Mammary epithelial cell (primary cell): ENCODE measurements at regions of chr11 and their contacts with region 1.

Region 1: DNA sequence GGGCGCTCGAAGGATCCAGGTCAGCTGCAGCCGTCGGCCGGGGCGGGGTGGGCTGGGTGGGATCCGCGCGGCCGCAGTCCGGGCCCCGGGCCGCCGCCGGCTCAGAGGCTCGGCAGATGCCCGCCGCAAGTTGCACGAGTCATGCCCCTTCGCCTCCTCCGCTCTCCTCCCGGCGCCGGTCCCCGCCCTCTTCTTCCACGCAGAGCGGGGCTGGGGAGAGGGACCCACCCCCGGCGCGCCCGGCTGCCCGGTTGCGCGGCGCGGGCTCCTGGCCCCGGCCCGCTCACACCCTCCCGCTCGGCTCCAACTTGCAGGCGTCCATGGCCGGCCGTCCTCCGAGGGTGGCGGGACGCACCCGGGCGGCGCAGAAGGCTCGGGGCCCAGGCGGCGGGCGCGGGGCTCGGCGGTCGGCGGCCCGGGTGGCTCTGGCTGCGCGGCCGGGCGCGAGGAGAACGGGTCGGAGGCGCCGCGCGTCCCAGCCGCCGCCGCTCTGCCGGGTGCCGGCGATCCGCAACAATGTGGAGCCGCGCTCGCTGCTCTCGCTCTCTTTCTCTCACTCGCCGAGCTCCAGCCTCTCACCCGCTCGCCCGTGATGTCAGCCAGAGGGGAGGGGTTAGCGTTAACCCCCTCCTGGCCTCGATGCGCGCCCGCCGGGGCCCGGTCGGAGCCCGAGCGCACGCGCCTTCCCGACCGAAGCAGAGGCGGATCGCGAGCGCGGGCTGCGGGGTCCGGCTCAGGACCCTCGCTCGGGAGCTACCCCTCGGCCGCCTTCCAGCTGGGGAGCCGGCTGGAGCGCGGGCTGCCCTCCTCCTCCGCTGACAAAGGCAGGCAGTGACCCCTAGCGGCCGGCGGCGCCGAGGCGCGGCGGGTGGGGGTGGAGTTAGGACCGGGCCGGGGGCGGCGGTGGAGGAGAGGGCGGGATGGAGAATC is at the start of gene NECTIN1:
- DNase-seq: peak; percentile 86
- H3K4me3 ChIP-seq: peak within 1 kb of the TSS; percentile 79 to 92 (median 88)
- H3K27ac ChIP-seq: peak within 1 kb of the TSS; percentile 74
- H3K4me1 ChIP-seq: peaks cover 33% of the 10 kb centered on the region
- H3K27me3 ChIP-seq: no peaks in the 10 kb centered on the region
- CTCF ChIP-seq: peak; percentile 48 to 92
- total RNA-seq, gene NECTIN1: 60.8 to 162 TPM

Region 2: DNA sequence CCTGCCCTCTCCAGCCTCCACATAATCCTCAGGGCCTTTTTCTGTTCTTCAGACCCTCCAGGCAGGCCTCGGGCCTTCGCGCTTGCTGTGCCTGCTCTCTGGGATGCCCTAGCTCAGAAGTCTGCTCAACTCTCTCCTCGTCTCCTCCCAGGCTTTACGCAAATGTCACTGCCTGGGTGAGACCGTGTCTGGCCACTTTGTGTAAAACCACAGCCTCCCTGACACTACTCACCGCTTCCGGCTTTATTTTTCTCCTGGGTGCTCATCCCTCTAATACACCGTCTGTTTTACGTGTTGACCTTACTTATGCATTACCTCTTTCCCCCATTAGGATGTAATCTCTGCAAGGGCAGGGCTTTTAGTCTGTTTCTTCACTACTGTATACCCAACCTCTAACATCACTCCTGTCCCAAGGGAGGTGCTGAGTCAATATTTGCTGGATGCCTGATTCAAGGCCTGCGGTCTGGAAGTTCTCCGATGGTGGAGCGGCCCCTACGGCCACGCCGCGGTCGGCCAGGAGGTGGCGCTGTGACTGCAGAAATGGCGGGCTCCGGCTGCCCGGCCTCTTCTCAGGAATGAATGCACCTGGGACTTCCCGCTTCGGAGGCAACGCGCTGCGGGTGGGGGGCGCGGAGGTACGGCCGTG is 247.8 kb before region 1 on chr11:
- CTCF ChIA-PET with region 1: interaction called, 3 read pairs
- dilution Hi-C with region 1: no loop called
- in situ Hi-C with region 1: loop called in 1 of 2 experiments (anchors 25 kb)
- intact Hi-C with region 1: loop called (anchors 1 kb)
- DNase-seq: peak; percentile 78
- H3K4me3 ChIP-seq: no peak overlapping the region
- H3K27ac ChIP-seq: no peak overlapping the region
- H3K4me1 ChIP-seq: no peaks in the 10 kb centered on the region
- H3K27me3 ChIP-seq: no peaks in the 10 kb centered on the region
- CTCF ChIP-seq: peak; percentile 91 to 97

Region 3: GRCh38 chr11:119666463-119667131 is 62.3 kb before region 1 on chr11:
- CTCF ChIA-PET with region 1: interaction called, 8 read pairs
- dilution Hi-C with region 1: no loop called
- in situ Hi-C with region 1: loop called in 1 of 2 experiments (anchors 10 kb)
- intact Hi-C with region 1: loop called (anchors 1 kb)
- DNase-seq: peak; percentile 58
- H3K4me3 ChIP-seq: no peak overlapping the region
- H3K27ac ChIP-seq: peak overlapping the region; percentile 4
- H3K4me1 ChIP-seq: peaks cover 26% of the 10 kb centered on the region
- H3K27me3 ChIP-seq: no peaks in the 10 kb centered on the region
- CTCF ChIP-seq: peak; percentile 76 to 92

Region 4: GRCh38 chr11:119684361-119685110 is 44.4 kb before region 1 on chr11:
- CTCF ChIA-PET with region 1: no interaction called
- dilution Hi-C with region 1: no loop called
- in situ Hi-C with region 1: loop called (anchors 5 to 10 kb)
- intact Hi-C with region 1: loop called (anchors 1 kb)
- DNase-seq: peak; percentile 91
- H3K4me3 ChIP-seq: peak overlapping the region in 1 of 3 experiments; percentile 1
- H3K27ac ChIP-seq: peak overlapping the region; percentile 90
- H3K4me1 ChIP-seq: peaks cover 85% of the 10 kb centered on the region
- H3K27me3 ChIP-seq: no peaks in the 10 kb centered on the region
- CTCF ChIP-seq: no peak

Region 5: DNA sequence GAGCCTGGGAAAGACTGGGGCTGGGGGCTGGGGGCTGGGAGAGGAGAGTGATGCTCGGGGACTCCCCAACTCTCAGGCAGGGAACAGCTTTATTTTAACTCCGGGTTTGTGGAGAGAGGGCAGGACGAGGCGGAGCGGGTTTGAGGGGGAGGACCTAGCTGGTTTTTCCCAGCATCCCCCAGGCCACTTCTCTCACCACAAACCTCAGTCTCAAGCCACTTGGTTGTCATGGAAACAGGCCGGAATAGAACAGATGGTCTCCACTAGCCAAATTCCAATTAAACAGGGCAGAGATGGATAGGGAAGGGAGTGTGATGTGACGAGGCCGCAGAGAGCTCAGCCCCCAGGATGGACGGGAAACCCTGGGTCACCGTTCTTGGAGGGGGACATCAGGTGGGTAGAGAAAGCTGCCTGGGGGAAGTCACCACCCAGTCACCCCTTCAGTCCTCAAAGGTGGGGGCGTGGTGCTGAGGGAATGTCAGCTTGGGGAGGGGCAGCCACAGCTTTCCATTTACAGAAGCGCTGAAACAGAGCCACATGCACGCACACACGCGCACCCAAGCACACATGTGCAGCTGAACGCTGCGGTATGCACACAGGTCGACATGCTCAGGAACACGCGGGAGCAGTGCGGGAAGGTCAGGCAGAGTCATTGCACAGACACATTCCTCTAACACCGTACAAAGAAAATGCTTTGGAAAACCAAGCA is 19.1 kb before region 1 on chr11:
- CTCF ChIA-PET with region 1: no interaction called
- dilution Hi-C with region 1: no loop called
- in situ Hi-C with region 1: no loop called
- intact Hi-C with region 1: no loop called
- DNase-seq: no peak
- H3K4me3 ChIP-seq: no peak overlapping the region
- H3K27ac ChIP-seq: no peak overlapping the region
- H3K4me1 ChIP-seq: peaks cover 30% of the 10 kb centered on the region
- H3K27me3 ChIP-seq: no peaks in the 10 kb centered on the region
- CTCF ChIP-seq: no peak

Region 6: GRCh38 chr11:119779195-119780101 is 50.5 kb after region 1 on chr11:
- CTCF ChIA-PET with region 1: no interaction called
- dilution Hi-C with region 1: loop called (anchors 5 kb)
- in situ Hi-C with region 1: no loop called
- intact Hi-C with region 1: no loop called
- DNase-seq: no peak
- H3K4me3 ChIP-seq: no peak overlapping the region
- H3K27ac ChIP-seq: no peak overlapping the region
- H3K4me1 ChIP-seq: no peaks in the 10 kb centered on the region
- H3K27me3 ChIP-seq: no peaks in the 10 kb centered on the region
- CTCF ChIP-seq: no peak

Region 7: GRCh38 chr11:119810478-119811232 is 81.7 kb after region 1 on chr11:
- CTCF ChIA-PET with region 1: no interaction called
- dilution Hi-C with region 1: no loop called
- in situ Hi-C with region 1: no loop called
- intact Hi-C with region 1: no loop called
- DNase-seq: peak; percentile 38
- H3K4me3 ChIP-seq: no peak overlapping the region
- H3K27ac ChIP-seq: no peak overlapping the region
- H3K4me1 ChIP-seq: peaks cover 6% of the 10 kb centered on the region
- H3K27me3 ChIP-seq: no peaks in the 10 kb centered on the region
- CTCF ChIP-seq: no peak

Region 8: GRCh38 chr11:120013325-120014270 is 284.7 kb after region 1 on chr11:
- CTCF ChIA-PET with region 1: no interaction called
- dilution Hi-C with region 1: no loop called
- in situ Hi-C with region 1: no loop called
- intact Hi-C with region 1: loop called (anchors 2 kb)
- DNase-seq: peak; percentile 40
- H3K4me3 ChIP-seq: no peak overlapping the region
- H3K27ac ChIP-seq: no peak overlapping the region
- H3K4me1 ChIP-seq: no peaks in the 10 kb centered on the region
- H3K27me3 ChIP-seq: peaks cover 2% of the 10 kb centered on the region
- CTCF ChIP-seq: peak; percentile 87 to 98